Posterior cingulate gyrus (tissue), 11 donors: ENCODE measurements at regions of chr7 and their contacts with region 1.

Region 1: DNA sequence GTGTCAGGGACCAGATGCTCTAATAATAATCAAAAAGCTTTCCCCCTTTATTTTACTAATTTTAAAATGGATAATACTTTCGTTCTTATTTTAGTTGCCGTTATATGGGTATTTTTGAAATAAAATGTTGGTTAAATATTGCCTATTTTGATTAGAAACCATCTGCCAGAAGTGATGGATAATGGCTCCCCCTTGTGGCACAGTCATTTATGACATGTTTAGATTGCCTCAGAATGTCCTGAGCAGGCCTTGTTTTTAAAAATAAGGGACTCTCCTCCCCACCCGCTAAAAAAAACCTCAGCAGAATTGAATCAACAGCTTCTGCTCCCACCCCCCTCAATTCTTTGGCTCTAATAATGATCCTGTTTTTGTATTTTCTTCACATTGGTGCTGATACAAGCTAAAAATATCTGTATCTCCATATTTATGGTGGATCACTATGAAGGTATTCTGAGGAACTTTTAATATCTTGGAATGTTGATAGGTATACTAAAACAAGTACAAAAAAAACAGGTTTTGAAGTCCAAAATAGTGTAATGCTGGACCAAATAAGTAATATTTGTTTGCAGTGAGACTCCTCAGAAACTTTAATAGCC is 38.8 kb downstream of the TMEM60 start:
- DNase-seq: peak in 5 of 10 donors; percentile 17 to 69 (median 48)

Region 2: DNA sequence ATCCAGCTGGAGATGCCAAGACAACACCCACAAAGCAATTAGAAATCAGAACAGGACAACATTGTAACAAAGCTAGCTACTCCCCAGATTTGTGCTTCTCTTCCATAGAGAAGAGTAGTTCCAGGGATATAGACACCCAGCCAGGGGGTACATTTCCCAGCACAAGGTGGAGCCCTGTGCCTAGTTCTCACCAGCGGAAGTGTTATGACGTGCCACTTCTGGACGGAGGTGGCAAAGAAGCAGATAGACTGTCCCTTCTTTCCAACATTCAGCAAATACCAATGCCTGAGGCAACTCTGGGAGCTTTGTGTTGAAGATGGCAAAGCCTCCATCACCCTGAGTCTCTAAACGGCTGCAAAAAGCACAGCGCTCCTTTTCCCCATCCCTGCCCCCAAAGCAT is 319.8 kb before region 1 on chr7:
- intact Hi-C with region 1: loop called (anchors 2 kb)
- DNase-seq: peak in 7 of 10 donors; percentile 48 to 94 (median 60)

Region 3: GRCh38 chr7:77651573-77652162 is 107.7 kb before region 1 on chr7:
- intact Hi-C with region 1: loop called (anchors 1 kb)
- DNase-seq: no peak

Region 4: GRCh38 chr7:77696198-77697028 is 63.0 kb before region 1 on chr7 and contains the start of gene RSBN1L:
- intact Hi-C with region 1: loop called (anchors 5 kb)
- DNase-seq: peak; percentile 98 to 100 (median 99)

Region 5: GRCh38 chr7:77798394-77799077 is 39.1 kb after region 1 on chr7 and contains the starts of genes PHTF2 and TMEM60:
- intact Hi-C with region 1: loop called (anchors 2 kb)
- DNase-seq: peak; percentile 97 to 100 (median 99)

Region 6: DNA sequence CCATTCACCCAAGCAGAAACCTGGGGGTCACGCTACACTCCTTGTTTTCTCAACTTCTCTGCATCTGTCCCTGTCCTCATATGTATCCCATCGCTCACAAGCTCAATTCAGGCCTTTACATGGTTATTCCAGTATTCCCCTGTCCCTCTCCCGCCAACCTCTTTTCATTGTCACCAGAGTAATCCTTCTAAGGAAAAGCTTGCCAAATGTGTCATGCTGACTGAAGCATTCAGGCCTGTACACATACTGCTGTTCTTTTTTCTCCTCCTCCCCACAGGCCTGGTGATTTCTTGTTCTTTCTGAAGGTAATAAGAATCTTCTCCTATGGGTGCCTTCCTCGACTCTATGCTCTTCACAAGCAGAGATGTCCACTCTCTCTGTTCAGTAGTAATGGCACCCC is 321.4 kb after region 1 on chr7:
- intact Hi-C with region 1: no loop called
- DNase-seq: no peak